PC-9 (cell line): ENCODE measurements at regions of chr3 and their contacts with region 1.

Region 1: DNA sequence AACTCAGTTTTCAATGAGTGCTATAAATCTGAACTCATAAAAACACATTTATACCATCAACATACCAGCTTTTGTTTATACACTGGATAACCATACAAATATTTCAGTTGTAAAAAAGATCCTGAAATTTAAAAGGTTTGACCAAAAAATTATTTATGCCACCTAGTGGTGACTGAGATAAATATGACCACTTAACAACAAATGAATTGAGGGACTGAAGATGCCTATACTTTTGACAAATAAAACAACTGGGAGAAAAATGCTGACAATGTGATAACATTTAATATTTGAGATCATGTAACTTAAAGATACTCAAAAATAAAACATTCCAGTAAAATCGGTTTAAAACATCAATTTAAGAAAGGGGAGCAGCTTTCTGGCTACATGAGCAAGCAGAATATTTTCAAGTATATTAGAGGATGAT is 30.4 kb downstream of the ATG3 start:
- DNase-seq: no peak
- H3K4me3 ChIP-seq: no peak overlapping the region
- H3K27ac ChIP-seq: no peak overlapping the region
- H3K4me1 ChIP-seq: no peaks in the 10 kb centered on the region
- H3K27me3 ChIP-seq: no peaks in the 10 kb centered on the region
- CTCF ChIP-seq: peak; percentile 81

Region 2: GRCh38 chr3:111594205-111594604 is 937.2 kb before region 1 on chr3:
- CTCF ChIA-PET with region 1: no interaction called
- POLR2A ChIA-PET with region 1: interaction called, 22 read pairs
- intact Hi-C with region 1: no loop called
- DNase-seq: peak; percentile 74 to 92
- H3K4me3 ChIP-seq: no peak overlapping the region
- H3K27ac ChIP-seq: peak overlapping the region; percentile 57
- H3K4me1 ChIP-seq: peaks cover 28% of the 10 kb centered on the region
- H3K27me3 ChIP-seq: no peaks in the 10 kb centered on the region
- CTCF ChIP-seq: no peak

Region 3: GRCh38 chr3:111723293-111724215 is 807.8 kb before region 1 on chr3:
- CTCF ChIA-PET with region 1: no interaction called
- POLR2A ChIA-PET with region 1: no interaction called
- intact Hi-C with region 1: no loop called
- DNase-seq: peak in 1 of 2 experiments; percentile 94
- H3K4me3 ChIP-seq: no peak overlapping the region
- H3K27ac ChIP-seq: peak overlapping the region; percentile 74
- H3K4me1 ChIP-seq: peaks cover 28% of the 10 kb centered on the region
- H3K27me3 ChIP-seq: no peaks in the 10 kb centered on the region
- CTCF ChIP-seq: no peak

Region 4: GRCh38 chr3:112111785-112112402 is 419.5 kb before region 1 on chr3:
- CTCF ChIA-PET with region 1: interaction called, 3 read pairs
- POLR2A ChIA-PET with region 1: no interaction called
- intact Hi-C with region 1: loop called (anchors 1 kb)
- DNase-seq: peak; percentile 60 to 70
- H3K4me3 ChIP-seq: no peak overlapping the region
- H3K27ac ChIP-seq: no peak overlapping the region
- H3K4me1 ChIP-seq: peaks cover 6% of the 10 kb centered on the region; the same call in 1 of the 2 replicates
- H3K27me3 ChIP-seq: no peaks in the 10 kb centered on the region
- CTCF ChIP-seq: peak; percentile 97

Region 5: GRCh38 chr3:112136959-112137693 is 394.2 kb before region 1 on chr3:
- CTCF ChIA-PET with region 1: interaction called, 3 read pairs
- POLR2A ChIA-PET with region 1: no interaction called
- intact Hi-C with region 1: loop called (anchors 5 kb)
- DNase-seq: peak; percentile 53 to 61
- H3K4me3 ChIP-seq: no peak overlapping the region
- H3K27ac ChIP-seq: no peak overlapping the region
- H3K4me1 ChIP-seq: peaks cover 10% of the 10 kb centered on the region; the same call in 1 of the 2 replicates
- H3K27me3 ChIP-seq: no peaks in the 10 kb centered on the region
- CTCF ChIP-seq: peak; percentile 93

Region 6: GRCh38 chr3:112293368-112294321 is 237.7 kb before region 1 on chr3 and contains the start of gene SLC9C1:
- CTCF ChIA-PET with region 1: interaction called, 5 read pairs
- POLR2A ChIA-PET with region 1: no interaction called
- intact Hi-C with region 1: loop called (anchors 1 kb)
- DNase-seq: peak; percentile 36 to 38
- H3K4me3 ChIP-seq: no peak within 1 kb of the TSS
- H3K27ac ChIP-seq: no peak within 1 kb of the TSS
- H3K4me1 ChIP-seq: no peaks in the 10 kb centered on the region
- H3K27me3 ChIP-seq: no peaks in the 10 kb centered on the region
- CTCF ChIP-seq: peak; percentile 60
- total RNA-seq, gene SLC9C1: not detected in 2 replicates

Region 7: GRCh38 chr3:112303764-112304325 is 227.5 kb before region 1 on chr3:
- CTCF ChIA-PET with region 1: interaction called, 10 read pairs
- POLR2A ChIA-PET with region 1: no interaction called
- intact Hi-C with region 1: no loop called
- DNase-seq: no peak
- H3K4me3 ChIP-seq: no peak overlapping the region
- H3K27ac ChIP-seq: no peak overlapping the region
- H3K4me1 ChIP-seq: no peaks in the 10 kb centered on the region
- H3K27me3 ChIP-seq: no peaks in the 10 kb centered on the region
- CTCF ChIP-seq: no peak

Region 8: DNA sequence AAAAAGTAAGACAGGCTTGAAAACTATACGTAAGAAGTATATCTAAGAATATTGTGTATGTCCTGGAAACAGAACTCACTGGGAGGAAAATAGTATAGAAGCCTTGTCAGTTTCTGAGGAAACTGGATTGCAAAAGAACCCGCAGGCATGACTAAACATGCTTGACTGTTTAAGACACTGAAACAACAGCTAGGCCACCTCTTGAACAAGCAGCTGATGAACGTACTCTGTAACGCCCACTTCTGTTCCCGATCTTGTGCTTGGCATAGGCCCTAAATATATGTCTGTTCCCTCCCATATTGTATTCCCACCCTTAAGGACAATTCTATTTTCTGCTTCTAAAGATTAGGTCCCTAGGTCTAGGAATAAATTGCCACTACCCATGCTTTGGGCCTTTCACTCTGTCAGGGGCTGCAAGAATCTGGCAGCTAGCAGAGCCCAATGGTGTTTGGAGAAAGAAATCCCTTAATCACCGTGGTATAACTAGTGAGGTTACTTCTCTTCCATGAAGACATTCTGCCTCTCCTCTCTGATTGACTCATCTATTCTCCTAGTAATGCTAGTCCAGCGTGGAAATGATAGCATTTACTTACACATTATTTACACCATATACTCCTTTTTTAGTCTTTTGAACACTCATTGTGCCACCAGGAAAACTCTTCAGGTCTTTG is 152.2 kb before region 1 on chr3:
- CTCF ChIA-PET with region 1: no interaction called
- POLR2A ChIA-PET with region 1: no interaction called
- intact Hi-C with region 1: no loop called
- DNase-seq: no peak
- H3K4me3 ChIP-seq: no peak overlapping the region
- H3K27ac ChIP-seq: no peak overlapping the region
- H3K4me1 ChIP-seq: no peaks in the 10 kb centered on the region
- H3K27me3 ChIP-seq: no peaks in the 10 kb centered on the region
- CTCF ChIP-seq: no peak

Region 9: GRCh38 chr3:112681822-112682325 is 150.5 kb after region 1 on chr3:
- CTCF ChIA-PET with region 1: no interaction called
- POLR2A ChIA-PET with region 1: interaction called, 14 read pairs
- intact Hi-C with region 1: no loop called
- DNase-seq: peak; percentile 31 to 45
- H3K4me3 ChIP-seq: no peak overlapping the region
- H3K27ac ChIP-seq: peak overlapping the region; percentile 52
- H3K4me1 ChIP-seq: peaks cover 27% of the 10 kb centered on the region
- H3K27me3 ChIP-seq: no peaks in the 10 kb centered on the region
- CTCF ChIP-seq: no peak